Caco-2 (cell line): ENCODE measurements at regions of chr3 and their contacts with region 1.

Region 1: GRCh38 chr3:151227807-151228665 is 25.0 kb upstream of the GPR171 start:
- DNase-seq: peak; percentile 57 to 78
- H3K4me3 ChIP-seq: no peak overlapping the region
- H3K4me3 Mint-ChIP-seq: peak overlapping the region; percentile 35
- H3K27ac Mint-ChIP-seq: no peak overlapping the region
- H3K4me1 ChIP-seq: peaks cover 28% of the 10 kb centered on the region
- H3K4me1 Mint-ChIP-seq: peaks cover 26% of the 10 kb centered on the region
- H3K27me3 ChIP-seq: no peaks in the 10 kb centered on the region
- H3K27me3 Mint-ChIP-seq: no peaks in the 10 kb centered on the region
- CTCF ChIP-seq: peak; percentile 74 to 78

Region 2: GRCh38 chr3:150681057-150681456 is 547.0 kb before region 1 on chr3:
- CTCF ChIA-PET with region 1: no interaction called
- POLR2A ChIA-PET with region 1: no interaction called
- intact Hi-C with region 1: no loop called
- DNase-seq: no peak
- H3K4me3 ChIP-seq: no peak overlapping the region
- H3K4me3 Mint-ChIP-seq: no peak overlapping the region
- H3K27ac Mint-ChIP-seq: no peak overlapping the region
- H3K4me1 ChIP-seq: no peaks in the 10 kb centered on the region
- H3K4me1 Mint-ChIP-seq: no peaks in the 10 kb centered on the region
- H3K27me3 ChIP-seq: no peaks in the 10 kb centered on the region
- H3K27me3 Mint-ChIP-seq: no peaks in the 10 kb centered on the region
- CTCF ChIP-seq: no peak

Region 3: DNA sequence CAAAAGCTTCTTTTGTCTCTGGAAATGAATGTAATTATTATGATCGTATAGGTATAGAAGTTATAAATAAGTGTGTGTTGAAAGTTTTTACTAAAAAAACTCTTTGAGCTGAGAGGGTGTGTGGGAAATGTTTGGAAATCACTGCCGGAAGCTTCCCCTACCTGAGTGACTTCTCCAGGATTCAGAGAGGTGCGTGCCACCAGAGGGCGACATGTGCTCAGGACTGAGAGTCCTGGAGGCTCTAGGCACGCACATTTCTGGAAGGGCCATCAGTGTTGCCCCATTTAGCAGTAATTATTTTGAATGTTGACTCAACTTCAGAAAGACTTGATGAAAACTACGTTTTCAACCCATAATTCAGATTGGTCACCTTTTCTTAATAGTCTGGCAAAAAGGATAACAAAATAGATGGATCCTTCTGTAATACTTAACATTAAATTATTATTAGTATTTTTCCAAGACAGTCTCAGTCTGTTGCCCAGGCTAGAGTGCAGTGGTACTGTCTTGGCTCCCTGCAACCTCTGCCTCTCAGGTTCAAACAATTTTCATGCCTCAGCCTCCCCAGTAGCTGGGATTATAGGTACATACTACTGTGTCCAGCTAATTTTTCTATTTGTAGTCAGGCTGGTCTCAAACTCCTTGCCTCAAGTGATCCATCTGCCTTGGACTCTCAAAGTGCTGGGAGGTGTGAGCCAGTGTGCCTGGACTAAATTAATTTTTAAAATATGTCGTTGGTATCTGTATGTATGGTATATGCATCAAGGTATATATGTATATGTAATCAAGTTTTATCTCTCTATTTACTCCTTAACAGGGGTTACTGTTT is 59.6 kb before region 1 on chr3:
- CTCF ChIA-PET with region 1: interaction called, 4 read pairs
- POLR2A ChIA-PET with region 1: no interaction called
- intact Hi-C with region 1: loop called (anchors 1 kb)
- DNase-seq: peak; percentile 75 to 84
- H3K4me3 ChIP-seq: no peak overlapping the region
- H3K4me3 Mint-ChIP-seq: no peak overlapping the region
- H3K27ac Mint-ChIP-seq: no peak overlapping the region
- H3K4me1 ChIP-seq: no peaks in the 10 kb centered on the region
- H3K4me1 Mint-ChIP-seq: peaks cover 6% of the 10 kb centered on the region
- H3K27me3 ChIP-seq: no peaks in the 10 kb centered on the region
- H3K27me3 Mint-ChIP-seq: no peaks in the 10 kb centered on the region
- CTCF ChIP-seq: peak; percentile 89 to 94

Region 4: DNA sequence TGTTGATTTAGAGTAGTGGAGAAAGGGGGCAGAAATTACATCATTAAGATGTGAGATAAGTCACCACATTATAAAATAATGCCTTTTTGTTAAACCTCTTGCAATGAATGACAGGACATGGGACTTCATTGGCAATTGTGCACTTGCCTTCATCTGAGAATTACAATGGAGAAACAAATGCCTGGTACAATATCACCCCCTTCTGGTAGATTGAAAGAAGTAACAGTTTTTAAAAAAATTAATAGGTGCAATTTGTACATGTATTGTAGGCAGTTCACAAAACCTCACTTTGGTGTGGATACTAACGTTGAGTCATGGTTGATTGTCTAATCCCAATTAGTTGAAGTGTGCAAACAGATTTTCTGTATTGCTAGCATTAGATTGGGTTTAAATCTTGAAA is 54.9 kb after region 1 on chr3:
- CTCF ChIA-PET with region 1: no interaction called
- POLR2A ChIA-PET with region 1: interaction called, 3 read pairs
- intact Hi-C with region 1: loop called (anchors 1 kb)
- DNase-seq: peak in 1 of 2 experiments; percentile 44
- H3K4me3 ChIP-seq: no peak overlapping the region
- H3K4me3 Mint-ChIP-seq: no peak overlapping the region
- H3K27ac Mint-ChIP-seq: no peak overlapping the region
- H3K4me1 ChIP-seq: peaks cover 9% of the 10 kb centered on the region
- H3K4me1 Mint-ChIP-seq: peaks cover 7% of the 10 kb centered on the region
- H3K27me3 ChIP-seq: no peaks in the 10 kb centered on the region
- H3K27me3 Mint-ChIP-seq: no peaks in the 10 kb centered on the region
- CTCF ChIP-seq: peak; percentile 56 to 60

Region 5: GRCh38 chr3:151327571-151328198 is 99.6 kb after region 1 on chr3:
- CTCF ChIA-PET with region 1: no interaction called
- POLR2A ChIA-PET with region 1: no interaction called
- intact Hi-C with region 1: loop called (anchors 1 kb)
- DNase-seq: no peak
- H3K4me3 ChIP-seq: no peak overlapping the region
- H3K4me3 Mint-ChIP-seq: no peak overlapping the region
- H3K27ac Mint-ChIP-seq: no peak overlapping the region
- H3K4me1 ChIP-seq: no peaks in the 10 kb centered on the region
- H3K4me1 Mint-ChIP-seq: no peaks in the 10 kb centered on the region
- H3K27me3 ChIP-seq: no peaks in the 10 kb centered on the region
- H3K27me3 Mint-ChIP-seq: no peaks in the 10 kb centered on the region
- CTCF ChIP-seq: peak; percentile 52 to 59

Region 6: GRCh38 chr3:151345859-151346258 is 117.8 kb after region 1 on chr3:
- CTCF ChIA-PET with region 1: no interaction called
- POLR2A ChIA-PET with region 1: no interaction called
- intact Hi-C with region 1: no loop called
- DNase-seq: no peak
- H3K4me3 ChIP-seq: no peak overlapping the region
- H3K4me3 Mint-ChIP-seq: no peak overlapping the region
- H3K27ac Mint-ChIP-seq: no peak overlapping the region
- H3K4me1 ChIP-seq: no peaks in the 10 kb centered on the region
- H3K4me1 Mint-ChIP-seq: no peaks in the 10 kb centered on the region
- H3K27me3 ChIP-seq: no peaks in the 10 kb centered on the region
- H3K27me3 Mint-ChIP-seq: no peaks in the 10 kb centered on the region
- CTCF ChIP-seq: no peak

Region 7: GRCh38 chr3:151630938-151631441 is 403.0 kb after region 1 on chr3:
- CTCF ChIA-PET with region 1: no interaction called
- POLR2A ChIA-PET with region 1: no interaction called
- intact Hi-C with region 1: loop called (anchors 10 kb)
- DNase-seq: peak; percentile 51 to 69
- H3K4me3 ChIP-seq: no peak overlapping the region
- H3K4me3 Mint-ChIP-seq: peak overlapping the region; percentile 37
- H3K27ac Mint-ChIP-seq: peak overlapping the region; percentile 91
- H3K4me1 ChIP-seq: peaks cover 39% of the 10 kb centered on the region
- H3K4me1 Mint-ChIP-seq: peaks cover 21% of the 10 kb centered on the region
- H3K27me3 ChIP-seq: no peaks in the 10 kb centered on the region
- H3K27me3 Mint-ChIP-seq: no peaks in the 10 kb centered on the region
- CTCF ChIP-seq: no peak